Dorsolateral prefrontal cortex (tissue), 120 donors: ENCODE measurements at regions of chr16 and their contacts with region 1.

Region 1: DNA sequence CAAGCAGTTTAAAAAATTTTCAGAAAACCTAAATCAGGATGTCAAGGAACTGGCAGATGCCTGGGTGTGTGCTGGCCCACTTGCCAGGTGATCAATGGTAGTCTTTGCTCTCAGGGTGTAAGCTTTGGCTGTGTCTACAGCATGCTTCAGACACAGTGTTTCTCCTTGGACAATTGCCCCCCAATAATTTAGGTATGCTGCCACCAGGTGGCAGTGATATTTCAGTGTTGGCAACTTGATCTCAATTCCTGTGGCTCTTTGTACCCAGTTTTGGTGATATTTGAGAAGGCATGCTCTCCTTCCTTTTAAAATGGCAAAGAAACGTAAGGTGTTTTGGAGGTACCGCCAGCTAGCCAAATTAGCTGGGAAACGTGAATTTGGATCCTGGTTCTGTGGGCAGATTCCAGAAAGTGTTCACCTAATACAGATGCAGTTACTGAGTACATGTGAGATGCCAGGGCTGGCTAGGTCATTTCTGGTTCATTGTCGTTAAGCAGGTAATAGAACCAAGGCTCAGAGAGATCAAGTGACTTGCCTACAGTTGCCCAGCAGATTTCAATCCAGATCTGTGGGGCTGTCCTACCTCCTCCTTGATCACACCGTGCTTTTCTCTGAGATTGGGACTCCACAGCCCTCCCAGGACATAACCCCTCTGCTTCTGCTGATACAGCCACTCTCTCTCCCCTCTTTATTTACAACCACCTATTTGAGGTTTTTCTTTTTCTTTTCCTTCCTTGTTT is 155.6 kb upstream of the PLCG2 start:
- DNase-seq: peak in 2 of 10 donors; percentile 60 to 66
- H3K4me3 ChIP-seq: no peak overlapping the region
- H3K27ac ChIP-seq: no peak overlapping the region
- H3K27me3 ChIP-seq: no peaks in the 10 kb centered on the region
- CTCF ChIP-seq: peak; percentile 44 to 87 (median 74)

Region 2: DNA sequence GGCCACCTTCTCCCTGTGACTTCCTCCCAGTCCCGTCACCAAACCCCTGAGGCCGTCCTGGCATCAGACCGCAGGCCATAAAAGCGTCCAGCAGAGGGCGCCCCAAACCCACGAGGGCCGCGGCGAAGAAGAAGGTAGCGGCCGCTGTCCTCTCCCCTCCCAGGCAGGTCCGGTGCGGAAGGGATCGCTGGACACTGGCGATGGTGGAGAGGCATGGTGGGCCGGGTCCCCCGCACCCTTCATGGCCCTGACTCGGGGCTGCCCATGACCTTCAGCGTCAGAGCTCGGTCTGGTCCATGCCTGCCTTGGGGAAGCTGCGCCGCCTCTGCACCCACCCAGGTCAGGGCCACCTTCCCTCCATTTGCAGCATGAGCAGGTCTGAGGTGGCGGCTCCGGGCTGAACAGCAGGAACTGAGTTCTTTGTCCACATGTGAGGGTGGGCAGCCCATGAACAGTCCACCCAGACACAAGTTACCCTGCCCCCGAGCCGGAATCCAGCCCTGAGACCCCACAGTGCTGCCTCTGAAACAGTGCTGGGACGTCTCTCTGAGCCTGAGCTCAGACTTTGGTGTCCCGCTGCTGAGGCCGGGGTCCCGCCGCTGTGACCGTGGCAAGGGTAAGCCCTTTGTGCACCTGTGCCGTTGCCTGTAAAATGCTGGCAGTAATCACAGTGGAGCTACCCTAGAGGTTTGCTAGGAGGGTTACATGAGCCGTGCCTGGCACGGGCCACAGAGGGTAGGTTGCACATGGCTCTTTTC is 219.7 kb before region 1 on chr16:
- intact Hi-C with region 1: loop called (anchors 1 to 10 kb)
- DNase-seq: peak; percentile 74 to 88 (median 80)
- H3K4me3 ChIP-seq: peak overlapping the region in 58 of 59 donors; percentile 1 to 67 (median 49)
- H3K27ac ChIP-seq: peak overlapping the region in 1 of 59 donors; percentile 48
- H3K27me3 ChIP-seq: peaks cover 0 to 2% (median 0%) of the 10 kb centered on the region in 45 donors
- CTCF ChIP-seq: peak; percentile 74 to 99 (median 97)

Region 3: GRCh38 chr16:81469710-81470535 is 153.6 kb before region 1 on chr16:
- intact Hi-C with region 1: no loop called
- DNase-seq: no peak
- H3K4me3 ChIP-seq: no peak overlapping the region
- H3K27ac ChIP-seq: peak overlapping the region in 38 of 59 donors; percentile 1 to 64 (median 40)
- H3K27me3 ChIP-seq: no peaks in the 10 kb centered on the region
- CTCF ChIP-seq: no peak

Region 4: DNA sequence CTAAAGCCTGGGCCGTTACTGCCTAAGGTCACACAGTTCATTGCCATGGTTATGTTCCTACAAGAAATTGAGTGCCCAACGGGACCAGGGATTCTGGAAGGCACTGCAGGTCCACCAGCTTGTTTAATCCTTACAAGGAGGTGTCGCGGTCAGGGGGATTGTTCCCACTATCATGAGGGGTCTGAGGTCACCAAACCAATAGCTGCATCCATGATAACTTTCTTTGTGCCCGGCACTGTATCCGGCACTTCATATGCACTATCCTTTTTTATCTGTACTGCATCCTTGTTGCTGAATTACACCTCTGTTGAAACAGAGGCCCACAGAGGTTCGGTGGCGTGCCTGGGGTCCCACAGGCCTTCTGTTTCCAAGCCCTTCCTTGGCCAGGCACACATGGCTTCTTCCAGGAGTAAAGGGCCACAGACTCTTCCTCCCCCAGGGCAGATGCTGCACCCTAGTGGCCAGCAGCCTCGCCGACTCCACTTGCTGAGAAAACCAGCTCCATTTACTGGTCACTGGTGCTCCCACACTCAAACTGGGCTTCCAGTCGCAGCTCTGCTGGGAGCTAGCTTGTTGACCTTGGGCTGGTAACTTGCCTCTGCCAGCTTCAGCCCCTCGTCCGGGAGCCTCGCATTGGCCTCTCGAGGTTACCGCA is 73.6 kb after region 1 on chr16:
- intact Hi-C with region 1: loop called in 1 of 2 experiments (anchors 5 kb)
- DNase-seq: peak in 6 of 10 donors; percentile 39 to 64 (median 56)
- H3K4me3 ChIP-seq: peak overlapping the region in 16 of 59 donors; percentile 6 to 44 (median 24)
- H3K27ac ChIP-seq: peak overlapping the region in 54 of 59 donors; percentile 9 to 93 (median 75)
- H3K27me3 ChIP-seq: no peaks in the 10 kb centered on the region
- CTCF ChIP-seq: peak in 55 of 56 donors; percentile 21 to 75 (median 60)

Region 5: DNA sequence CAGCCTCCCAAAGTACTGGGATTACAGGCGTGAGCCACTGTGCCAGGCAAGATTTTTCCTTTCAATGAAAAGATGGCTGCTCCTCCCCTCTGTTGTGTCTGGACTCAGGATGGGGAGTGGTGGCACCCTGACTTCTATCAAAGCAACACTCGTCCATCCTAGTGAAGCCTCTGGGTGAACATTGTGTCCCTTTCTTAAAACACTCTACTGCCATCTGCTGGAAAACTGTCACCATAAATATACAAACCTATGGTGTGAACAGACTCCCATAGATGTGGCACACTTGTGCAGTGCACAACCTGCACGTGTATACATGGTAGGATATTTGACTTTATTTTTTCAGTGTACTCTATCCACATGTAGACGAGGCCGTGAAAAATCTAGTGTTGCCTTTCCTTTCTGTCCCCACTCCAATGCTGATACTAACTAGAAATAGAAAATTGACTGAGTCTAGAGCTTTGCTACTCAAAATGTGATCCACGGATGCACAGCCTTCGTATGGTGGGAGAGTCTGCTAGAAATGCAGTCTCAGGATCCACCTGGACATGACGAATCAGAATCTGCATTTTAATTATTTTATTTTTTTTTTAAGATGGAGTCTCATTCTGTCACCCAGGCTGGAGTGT is 99.7 kb after region 1 on chr16:
- intact Hi-C with region 1: loop called (anchors 1 to 5 kb)
- DNase-seq: peak in 1 of 10 donors; percentile 30
- H3K4me3 ChIP-seq: no peak overlapping the region
- H3K27ac ChIP-seq: no peak overlapping the region
- H3K27me3 ChIP-seq: no peaks in the 10 kb centered on the region
- CTCF ChIP-seq: peak; percentile 13 to 96 (median 85)